ENCODE measurements at regions of chr5 and their contacts with region 1.

Region 1: DNA sequence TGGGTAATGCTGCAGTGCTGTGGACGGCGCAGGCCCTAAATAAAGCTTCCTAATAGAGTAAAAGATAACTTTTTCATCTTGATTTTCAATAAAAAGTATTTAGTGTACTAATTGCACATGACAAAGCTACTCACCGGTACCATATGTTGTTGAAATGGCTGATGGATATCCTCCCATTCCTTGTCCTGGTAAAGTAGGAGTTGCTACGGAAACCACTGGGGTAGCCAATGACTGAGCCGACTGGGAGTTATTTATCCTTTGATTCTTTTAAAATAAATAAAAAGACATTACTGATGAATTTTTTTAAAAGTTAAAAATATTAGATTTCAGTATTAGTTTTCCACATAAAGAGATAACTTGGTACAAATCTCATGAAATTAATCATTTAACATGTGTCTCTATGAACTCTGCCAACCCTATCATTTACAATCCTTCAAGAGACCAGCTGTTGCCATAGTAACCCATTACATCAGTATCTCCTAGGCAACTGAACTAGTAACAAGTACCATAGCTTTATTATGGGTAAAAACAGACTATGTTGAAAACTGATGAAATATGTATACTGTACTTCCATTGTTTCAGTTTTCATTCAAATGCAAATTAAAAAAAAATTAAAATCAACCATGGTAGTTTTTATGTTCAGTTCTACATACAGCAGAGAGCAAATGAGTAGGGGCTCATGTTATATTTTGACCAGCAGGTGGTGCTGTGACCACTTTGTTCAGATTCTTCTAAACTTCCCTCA is 153.7 kb downstream of the MEF2C start:
- DNase-seq: peak in 1 of 2 experiments; percentile 54
- H3K4me3 ChIP-seq: no peak overlapping the region
- H3K27ac ChIP-seq: no peak overlapping the region
- H3K4me1 ChIP-seq: no peaks in the 10 kb centered on the region
- H3K27me3 ChIP-seq: no peaks in the 10 kb centered on the region
- CTCF ChIP-seq: peak; percentile 86

Region 2: GRCh38 chr5:87780831-87781760 is 948.2 kb before region 1 on chr5:
- CTCF ChIA-PET with region 1: interaction called, 26 read pairs
- POLR2A ChIA-PET with region 1: no interaction called
- intact Hi-C with region 1: loop called (anchors 2 kb)
- DNase-seq: peak; percentile 63 to 69
- H3K4me3 ChIP-seq: peak overlapping the region; percentile 36; the same call in 1 of the 2 replicates
- H3K27ac ChIP-seq: no peak overlapping the region
- H3K4me1 ChIP-seq: no peaks in the 10 kb centered on the region
- H3K27me3 ChIP-seq: no peaks in the 10 kb centered on the region
- CTCF ChIP-seq: peak; percentile 90

Region 3: DNA sequence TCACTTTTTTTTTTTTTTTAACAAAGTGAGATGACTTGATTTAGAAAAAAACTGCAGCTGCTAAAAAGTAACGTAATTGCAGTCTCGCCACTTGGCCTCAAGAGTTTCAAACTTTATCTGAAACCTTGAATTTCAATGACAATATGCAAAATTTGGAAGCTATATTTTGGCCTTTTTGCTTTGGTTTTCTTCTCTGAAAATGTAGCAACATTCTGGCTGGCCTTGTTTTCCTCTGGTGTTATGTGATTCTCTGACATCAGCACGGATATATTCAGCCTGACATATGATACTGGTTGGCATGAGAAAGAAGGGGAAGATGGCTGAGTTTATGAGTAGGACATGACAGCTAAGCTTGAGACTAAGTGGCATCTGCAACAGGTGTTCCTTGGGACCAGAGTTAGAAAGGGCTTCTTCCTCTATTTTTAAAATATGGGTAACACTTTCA is 17.2 kb after region 1 on chr5:
- CTCF ChIA-PET with region 1: no interaction called
- POLR2A ChIA-PET with region 1: no interaction called
- intact Hi-C with region 1: no loop called
- DNase-seq: no peak
- H3K4me3 ChIP-seq: no peak overlapping the region
- H3K27ac ChIP-seq: no peak overlapping the region
- H3K4me1 ChIP-seq: peaks cover 9% of the 10 kb centered on the region; the same call in 1 of the 2 replicates
- H3K27me3 ChIP-seq: no peaks in the 10 kb centered on the region
- CTCF ChIP-seq: no peak

Region 4: GRCh38 chr5:88883059-88883835 is 154.0 kb after region 1 on chr5 and contains the start of gene MEF2C:
- CTCF ChIA-PET with region 1: interaction called, 6 read pairs
- POLR2A ChIA-PET with region 1: no interaction called
- intact Hi-C with region 1: loop called (anchors 1 kb)
- DNase-seq: peak in 1 of 2 experiments; percentile 46
- H3K4me3 ChIP-seq: peak within 1 kb of the TSS; percentile 87
- H3K27ac ChIP-seq: 0 out of 2 replicates have a peak within 1 kb of the TSS, but pooled peaks have one; percentile 18
- H3K4me1 ChIP-seq: peaks cover 13% of the 10 kb centered on the region
- H3K27me3 ChIP-seq: no peaks in the 10 kb centered on the region
- CTCF ChIP-seq: no peak
- total RNA-seq, gene MEF2C: 1.6 and 2.5 TPM in 2 replicates

Region 5: DNA sequence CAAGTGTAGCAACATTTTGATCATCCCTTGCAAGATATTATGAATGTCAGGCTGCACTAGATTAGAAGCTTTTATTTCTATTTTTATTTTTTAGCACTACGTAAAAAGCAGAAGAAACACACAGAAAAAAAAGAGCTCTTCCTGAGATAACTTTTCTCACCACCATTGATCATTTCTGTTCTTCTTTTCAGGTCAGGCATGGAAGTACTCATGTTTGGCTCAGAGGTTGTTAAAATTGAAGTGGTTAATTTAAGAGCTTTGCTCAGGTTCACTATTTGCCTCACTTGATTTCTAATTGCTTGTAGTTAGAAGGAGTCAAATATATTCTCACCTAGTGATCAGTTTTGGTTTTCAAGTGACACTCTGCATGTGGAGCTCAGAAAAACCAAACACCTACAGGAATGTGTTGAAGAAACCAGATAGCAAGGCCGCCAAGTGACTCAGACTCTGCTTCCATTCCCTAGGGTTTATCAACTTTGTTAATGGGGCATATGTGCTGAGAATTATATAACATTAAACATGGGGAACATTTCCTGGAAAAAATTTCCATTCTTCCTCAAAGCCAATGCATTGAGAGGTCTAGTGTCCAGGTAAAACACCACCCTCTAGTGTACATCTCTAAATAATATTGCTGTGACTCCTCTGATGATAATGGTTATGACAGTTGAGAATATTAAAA is 1000.5 kb after region 1 on chr5:
- CTCF ChIA-PET with region 1: interaction called, 4 read pairs
- POLR2A ChIA-PET with region 1: no interaction called
- intact Hi-C with region 1: loop called (anchors 1 kb)
- DNase-seq: peak; percentile 9 to 34
- H3K4me3 ChIP-seq: no peak overlapping the region
- H3K27ac ChIP-seq: no peak overlapping the region
- H3K4me1 ChIP-seq: no peaks in the 10 kb centered on the region
- H3K27me3 ChIP-seq: no peaks in the 10 kb centered on the region
- CTCF ChIP-seq: peak; percentile 41; the same call in 1 of the 2 replicates

Region 6: DNA sequence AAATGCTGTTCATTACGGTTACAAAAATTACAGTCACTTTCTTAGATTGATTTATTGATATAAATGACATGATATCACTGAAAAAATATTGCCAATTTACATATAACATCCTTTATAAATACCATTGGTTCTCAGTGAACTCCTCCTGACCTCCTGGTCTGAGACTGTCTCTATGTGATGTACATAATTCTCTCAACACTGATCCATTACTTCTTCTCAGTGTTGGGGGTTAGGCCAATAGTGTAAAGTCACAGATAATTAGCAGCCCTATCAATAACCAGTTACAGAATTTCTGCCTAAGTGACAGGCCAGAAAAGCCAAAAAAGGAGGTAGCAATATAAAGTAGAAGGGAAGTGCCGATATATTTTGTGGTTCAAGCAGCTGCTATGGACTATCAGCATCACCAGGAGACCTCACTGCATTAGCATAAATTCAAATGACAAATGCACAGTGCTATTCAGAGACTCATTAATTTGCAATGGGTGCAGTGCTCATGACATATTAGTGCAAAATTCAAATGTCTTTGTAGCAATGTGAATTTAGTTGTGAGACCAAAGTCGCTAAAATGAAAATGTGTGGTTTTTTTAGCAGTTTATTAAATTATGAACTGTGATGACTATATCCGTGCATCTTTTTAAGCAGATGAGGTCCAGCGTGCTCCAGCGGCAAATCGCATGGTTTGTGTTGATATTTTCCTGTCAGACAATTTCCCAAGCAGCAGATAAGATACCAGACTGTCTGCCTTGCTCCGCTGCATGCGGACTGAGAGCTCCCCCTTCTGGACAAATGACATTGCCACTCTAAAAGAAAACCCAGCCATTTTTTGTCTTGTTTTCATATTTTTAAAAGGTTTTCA is 1535.7 kb after region 1 on chr5:
- CTCF ChIA-PET with region 1: interaction called, 4 read pairs
- POLR2A ChIA-PET with region 1: no interaction called
- intact Hi-C with region 1: loop called (anchors 1 kb)
- DNase-seq: peak in 1 of 2 experiments; percentile 55
- H3K4me3 ChIP-seq: no peak overlapping the region
- H3K27ac ChIP-seq: no peak overlapping the region
- H3K4me1 ChIP-seq: no peaks in the 10 kb centered on the region
- H3K27me3 ChIP-seq: no peaks in the 10 kb centered on the region
- CTCF ChIP-seq: peak; percentile 93

Region 7: DNA sequence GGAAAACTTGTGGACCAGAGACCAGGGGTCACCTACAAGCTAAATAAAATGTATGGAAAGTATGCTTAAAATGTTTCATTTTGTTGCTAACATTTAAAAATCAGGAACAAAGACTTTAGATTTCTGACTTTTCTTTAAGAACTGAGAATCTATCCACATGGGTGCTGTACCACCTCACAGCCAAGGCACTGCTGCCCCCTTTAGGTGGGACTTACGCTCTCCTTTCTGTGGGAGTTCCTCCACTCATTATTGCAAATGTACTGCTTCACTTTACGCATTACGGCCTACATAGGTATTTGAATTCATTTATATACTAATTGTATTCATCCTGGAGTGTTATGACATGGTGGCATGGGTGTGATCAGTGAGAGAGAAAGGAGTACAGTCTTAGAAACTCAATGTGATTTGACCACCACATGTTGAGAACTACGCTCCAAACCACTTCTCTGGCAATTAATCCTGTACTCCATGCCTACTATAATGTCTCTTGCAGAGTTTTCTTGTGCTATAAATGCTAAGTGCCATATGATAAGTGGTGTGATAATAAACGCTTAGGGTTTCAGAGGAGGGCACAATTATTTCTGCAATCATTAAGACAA is 1705.0 kb after region 1 on chr5:
- CTCF ChIA-PET with region 1: no interaction called
- POLR2A ChIA-PET with region 1: no interaction called
- intact Hi-C with region 1: loop called (anchors 2 kb)
- DNase-seq: peak in 1 of 2 experiments; percentile 27
- H3K4me3 ChIP-seq: no peak overlapping the region
- H3K27ac ChIP-seq: no peak overlapping the region
- H3K4me1 ChIP-seq: peaks cover 19% of the 10 kb centered on the region
- H3K27me3 ChIP-seq: no peaks in the 10 kb centered on the region
- CTCF ChIP-seq: peak; percentile 56